ENCODE measurements at regions of chr21 and their contacts with region 1.

Region 1: GRCh38 chr21:36209626-36210171 is 53.1 kb downstream of the DOP1B start:
- DNase-seq: peak; percentile 73
- ATAC-seq: no peak
- H3K4me3 Mint-ChIP-seq: no peak overlapping the region
- H3K27ac Mint-ChIP-seq: peak overlapping the region; percentile 2
- H3K4me1 Mint-ChIP-seq: peaks cover 16% of the 10 kb centered on the region
- H3K27me3 Mint-ChIP-seq: no peaks in the 10 kb centered on the region

Region 2: GRCh38 chr21:36149788-36150711 is 59.6 kb before region 1 on chr21:
- CTCF ChIA-PET with region 1: interaction called, 60 read pairs
- POLR2A ChIA-PET with region 1: interaction called, 3 read pairs
- DNase-seq: no peak
- ATAC-seq: peak; percentile 45
- H3K4me3 Mint-ChIP-seq: peak overlapping the region; percentile 42
- H3K27ac Mint-ChIP-seq: peak overlapping the region; percentile 93
- H3K4me1 Mint-ChIP-seq: peaks cover 64% of the 10 kb centered on the region
- H3K27me3 Mint-ChIP-seq: no peaks in the 10 kb centered on the region

Region 3: GRCh38 chr21:36223451-36223850 is 13.8 kb after region 1 on chr21:
- CTCF ChIA-PET with region 1: interaction called, 27 read pairs
- POLR2A ChIA-PET with region 1: no interaction called
- DNase-seq: no peak
- ATAC-seq: no peak
- H3K4me3 Mint-ChIP-seq: no peak overlapping the region
- H3K27ac Mint-ChIP-seq: no peak overlapping the region
- H3K4me1 Mint-ChIP-seq: no peaks in the 10 kb centered on the region
- H3K27me3 Mint-ChIP-seq: no peaks in the 10 kb centered on the region

Region 4: DNA sequence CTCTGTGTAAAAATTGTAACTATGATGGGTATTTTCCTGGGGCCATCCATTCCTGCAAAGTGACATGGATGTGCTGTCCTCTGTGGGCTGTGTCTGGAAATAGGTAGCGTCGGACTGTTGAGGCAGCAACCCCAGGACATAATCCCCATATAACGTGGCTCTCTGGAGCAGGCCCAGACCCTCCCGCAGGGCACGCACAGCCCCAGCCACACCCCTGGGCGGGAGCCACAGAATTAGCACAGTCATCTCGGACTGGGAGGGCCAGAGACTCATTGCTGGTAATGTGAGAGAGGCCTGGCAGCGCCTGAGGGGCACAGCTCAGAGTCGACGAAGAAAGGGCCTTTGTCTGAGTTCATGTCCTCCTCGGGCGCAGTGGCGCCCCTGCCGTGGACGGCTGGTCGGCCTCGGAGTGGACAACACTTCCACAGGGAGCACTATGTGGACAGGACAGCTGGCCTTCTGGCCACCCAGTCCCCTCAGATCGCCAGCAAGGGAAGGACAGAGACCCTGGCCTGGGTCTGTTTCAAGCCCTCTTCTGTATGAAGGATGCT is 509.3 kb after region 1 on chr21:
- CTCF ChIA-PET with region 1: no interaction called
- POLR2A ChIA-PET with region 1: no interaction called
- DNase-seq: no peak
- ATAC-seq: no peak
- H3K4me3 Mint-ChIP-seq: no peak overlapping the region
- H3K27ac Mint-ChIP-seq: no peak overlapping the region
- H3K4me1 Mint-ChIP-seq: no peaks in the 10 kb centered on the region
- H3K27me3 Mint-ChIP-seq: peaks cover 30% of the 10 kb centered on the region